Caco-2 (cell line): ENCODE measurements at regions of chr20 and their contacts with region 1.

Region 1: GRCh38 chr20:32681175-32682084 is 7.7 kb upstream of the C20orf203 start:
- DNase-seq: peak; percentile 64 to 72
- H3K4me3 ChIP-seq: no peak overlapping the region
- H3K4me3 Mint-ChIP-seq: no peak overlapping the region
- H3K27ac Mint-ChIP-seq: peak overlapping the region; percentile 86
- H3K4me1 ChIP-seq: peaks cover 46% of the 10 kb centered on the region
- H3K4me1 Mint-ChIP-seq: peaks cover 49% of the 10 kb centered on the region
- H3K27me3 ChIP-seq: no peaks in the 10 kb centered on the region
- H3K27me3 Mint-ChIP-seq: no peaks in the 10 kb centered on the region
- CTCF ChIP-seq: no peak

Region 2: DNA sequence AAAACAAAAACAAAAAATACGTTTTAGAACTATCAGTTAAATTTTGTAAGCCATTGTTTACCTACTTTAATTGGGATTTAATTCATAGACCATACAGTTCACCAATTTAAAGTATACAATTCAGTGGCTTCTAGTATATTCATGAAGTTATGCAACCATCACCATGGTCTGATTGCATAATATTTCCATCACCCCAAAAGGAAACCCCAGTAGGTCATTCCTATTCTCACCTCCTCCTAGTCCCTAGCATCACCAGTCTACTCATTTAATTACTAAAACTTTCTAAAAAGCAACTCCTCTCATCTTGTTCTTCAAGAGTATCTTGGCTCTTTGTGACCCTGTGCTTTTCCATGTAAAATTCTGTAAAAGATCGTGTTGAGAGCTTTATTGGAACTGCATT is 263.1 kb before region 1 on chr20:
- CTCF ChIA-PET with region 1: no interaction called
- POLR2A ChIA-PET with region 1: interaction called, 14 read pairs
- intact Hi-C with region 1: no loop called
- DNase-seq: no peak
- H3K4me3 ChIP-seq: no peak overlapping the region
- H3K4me3 Mint-ChIP-seq: no peak overlapping the region
- H3K27ac Mint-ChIP-seq: no peak overlapping the region
- H3K4me1 ChIP-seq: no peaks in the 10 kb centered on the region
- H3K4me1 Mint-ChIP-seq: peaks cover 13% of the 10 kb centered on the region
- H3K27me3 ChIP-seq: no peaks in the 10 kb centered on the region
- H3K27me3 Mint-ChIP-seq: no peaks in the 10 kb centered on the region
- CTCF ChIP-seq: no peak

Region 3: GRCh38 chr20:32762149-32762753 is 80.8 kb after region 1 on chr20 and contains the start of gene DNMT3B:
- CTCF ChIA-PET with region 1: interaction called, 5 read pairs
- POLR2A ChIA-PET with region 1: no interaction called
- intact Hi-C with region 1: loop called (anchors 5 kb)
- DNase-seq: peak; percentile 97 to 99
- H3K4me3 ChIP-seq: peak within 1 kb of the TSS; percentile 87
- H3K4me3 Mint-ChIP-seq: peak within 1 kb of the TSS; percentile 100
- H3K27ac Mint-ChIP-seq: peak within 1 kb of the TSS; percentile 93
- H3K4me1 ChIP-seq: peaks cover 25% of the 10 kb centered on the region
- H3K4me1 Mint-ChIP-seq: peaks cover 33% of the 10 kb centered on the region
- H3K27me3 ChIP-seq: no peaks in the 10 kb centered on the region
- H3K27me3 Mint-ChIP-seq: no peaks in the 10 kb centered on the region
- CTCF ChIP-seq: peak in 1 of 2 experiments; percentile 31
- total RNA-seq, gene DNMT3B: 95.5 and 105 TPM in 2 replicates